SK-N-SH (cell line): ENCODE measurements at regions of chr2 and their contacts with region 1.

Region 1: GRCh38 chr2:216666461-216667233 is 28.7 kb downstream of the IGFBP5 start:
- DNase-seq: peak; percentile 79
- H3K4me3 ChIP-seq: no peak overlapping the region; a peak in 1 of 4 replicates
- H3K27ac ChIP-seq: no peak overlapping the region; a peak in 1 of 4 replicates
- H3K4me1 ChIP-seq: peaks cover 14 to 23% of the 10 kb centered on the region in 2 experiments; a peak in 3 of 4 replicates
- H3K27me3 ChIP-seq: no peaks in the 10 kb centered on the region
- CTCF ChIP-seq: peak; percentile 98
- EP300 ChIP-seq: no peak
- RAD21 ChIP-seq: peak; percentile 100

Region 2: GRCh38 chr2:216519154-216519762 is 147.4 kb before region 1 on chr2:
- CTCF ChIA-PET with region 1: interaction called, 614 read pairs
- POLR2A ChIA-PET with region 1: interaction called, 17 read pairs
- DNase-seq: peak; percentile 64
- H3K4me3 ChIP-seq: no peak overlapping the region; a peak in 1 of 4 replicates
- H3K27ac ChIP-seq: no peak overlapping the region
- H3K4me1 ChIP-seq: peaks cover 0 to 5% of the 10 kb centered on the region in 2 experiments; a peak in 2 of 4 replicates
- H3K27me3 ChIP-seq: no peaks in the 10 kb centered on the region
- CTCF ChIP-seq: peak; percentile 85
- EP300 ChIP-seq: no peak
- RAD21 ChIP-seq: peak; percentile 91

Region 3: GRCh38 chr2:216590780-216591179 is 75.9 kb before region 1 on chr2:
- CTCF ChIA-PET with region 1: interaction called, 11 read pairs
- POLR2A ChIA-PET with region 1: no interaction called
- DNase-seq: peak; percentile 30
- H3K4me3 ChIP-seq: no peak overlapping the region
- H3K27ac ChIP-seq: no peak overlapping the region
- H3K4me1 ChIP-seq: peaks cover 14 to 21% of the 10 kb centered on the region in 2 experiments
- H3K27me3 ChIP-seq: no peaks in the 10 kb centered on the region
- CTCF ChIP-seq: no peak
- EP300 ChIP-seq: no peak
- RAD21 ChIP-seq: 0 out of 2 replicates have a peak, but pooled peaks have one; percentile 7

Region 4: DNA sequence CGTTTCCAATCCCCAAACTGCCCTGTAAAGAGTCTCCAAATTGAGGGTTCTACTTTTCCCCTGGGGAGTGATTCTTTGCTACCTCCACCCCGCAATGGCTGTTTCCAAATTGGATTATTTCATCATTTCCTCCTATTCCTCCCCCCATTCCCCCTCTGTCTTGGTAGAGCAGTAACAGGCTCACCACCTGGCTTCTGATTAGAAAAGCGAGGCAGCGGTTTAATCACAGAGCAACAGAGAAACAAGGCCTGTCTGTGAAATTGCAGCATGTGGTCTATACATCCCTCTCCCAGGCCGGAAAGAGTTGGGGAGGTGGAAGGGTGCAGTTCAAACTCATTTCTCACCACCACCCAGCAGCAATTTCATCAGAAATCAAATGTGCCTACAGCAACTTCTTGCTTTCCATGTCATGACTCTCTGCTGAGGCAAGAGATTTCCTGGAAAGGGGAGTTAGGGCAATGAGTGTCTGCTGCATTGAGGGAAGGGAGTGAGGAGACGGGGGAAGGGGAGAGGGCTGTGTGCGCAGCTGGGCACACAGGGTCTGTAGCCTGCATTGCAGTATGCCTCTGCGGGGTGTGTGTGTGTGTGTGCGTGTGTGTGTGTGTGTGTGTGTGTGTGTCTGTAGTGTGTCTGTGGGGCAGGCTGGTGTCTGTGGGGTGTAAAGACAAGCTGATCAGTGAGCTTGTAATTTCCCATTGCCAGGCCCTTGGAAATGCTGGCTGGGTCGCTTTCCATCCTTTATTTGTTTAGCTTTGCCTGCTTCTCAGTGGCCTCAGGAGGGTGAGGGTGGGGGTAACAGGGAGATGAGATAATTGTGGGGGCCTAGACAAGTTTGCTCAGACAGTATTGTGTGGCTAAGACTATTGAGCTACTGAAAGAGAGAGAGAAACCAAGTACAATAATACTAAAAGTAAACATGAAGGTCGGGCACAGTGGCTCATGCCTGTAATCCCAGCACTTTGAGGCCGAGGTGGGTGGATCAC is 46.9 kb before region 1 on chr2:
- CTCF ChIA-PET with region 1: interaction called, 41 read pairs
- POLR2A ChIA-PET with region 1: no interaction called
- DNase-seq: peak; percentile 74
- H3K4me3 ChIP-seq: no peak overlapping the region
- H3K27ac ChIP-seq: peak overlapping the region in 1 of 2 experiments; percentile 90; a peak in 2 of 4 replicates
- H3K4me1 ChIP-seq: peaks cover 19 to 38% of the 10 kb centered on the region in 2 experiments; a peak in 3 of 4 replicates
- H3K27me3 ChIP-seq: no peaks in the 10 kb centered on the region
- CTCF ChIP-seq: no peak
- EP300 ChIP-seq: peak in 1 of 2 experiments; percentile 76; a peak in 2 of 4 replicates
- RAD21 ChIP-seq: peak; percentile 22; the same call in 1 of the 2 replicates

Region 5: GRCh38 chr2:216651351-216651881 is 15.2 kb before region 1 on chr2:
- CTCF ChIA-PET with region 1: interaction called, 76 read pairs
- POLR2A ChIA-PET with region 1: no interaction called
- DNase-seq: no peak
- H3K4me3 ChIP-seq: no peak overlapping the region
- H3K27ac ChIP-seq: peak overlapping the region; percentile 31 to 58; a peak in 3 of 4 replicates
- H3K4me1 ChIP-seq: peaks cover 9 to 44% of the 10 kb centered on the region in 2 experiments
- H3K27me3 ChIP-seq: no peaks in the 10 kb centered on the region
- CTCF ChIP-seq: no peak
- EP300 ChIP-seq: no peak
- RAD21 ChIP-seq: no peak

Region 6: GRCh38 chr2:216687646-216688045 is 21.0 kb after region 1 on chr2:
- CTCF ChIA-PET with region 1: interaction called, 12 read pairs
- POLR2A ChIA-PET with region 1: no interaction called
- DNase-seq: no peak
- H3K4me3 ChIP-seq: no peak overlapping the region; a peak in 1 of 4 replicates
- H3K27ac ChIP-seq: no peak overlapping the region
- H3K4me1 ChIP-seq: peaks cover 12 to 29% of the 10 kb centered on the region in 2 experiments; a peak in 3 of 4 replicates
- H3K27me3 ChIP-seq: no peaks in the 10 kb centered on the region
- CTCF ChIP-seq: peak; percentile 53
- EP300 ChIP-seq: no peak
- RAD21 ChIP-seq: no peak

Region 7: GRCh38 chr2:216717491-216717901 is 50.8 kb after region 1 on chr2:
- CTCF ChIA-PET with region 1: no interaction called
- POLR2A ChIA-PET with region 1: no interaction called
- DNase-seq: no peak
- H3K4me3 ChIP-seq: no peak overlapping the region
- H3K27ac ChIP-seq: no peak overlapping the region
- H3K4me1 ChIP-seq: peaks cover 7 to 14% of the 10 kb centered on the region in 2 experiments; a peak in 3 of 4 replicates
- H3K27me3 ChIP-seq: no peaks in the 10 kb centered on the region
- CTCF ChIP-seq: no peak
- EP300 ChIP-seq: no peak
- RAD21 ChIP-seq: no peak

Region 8: DNA sequence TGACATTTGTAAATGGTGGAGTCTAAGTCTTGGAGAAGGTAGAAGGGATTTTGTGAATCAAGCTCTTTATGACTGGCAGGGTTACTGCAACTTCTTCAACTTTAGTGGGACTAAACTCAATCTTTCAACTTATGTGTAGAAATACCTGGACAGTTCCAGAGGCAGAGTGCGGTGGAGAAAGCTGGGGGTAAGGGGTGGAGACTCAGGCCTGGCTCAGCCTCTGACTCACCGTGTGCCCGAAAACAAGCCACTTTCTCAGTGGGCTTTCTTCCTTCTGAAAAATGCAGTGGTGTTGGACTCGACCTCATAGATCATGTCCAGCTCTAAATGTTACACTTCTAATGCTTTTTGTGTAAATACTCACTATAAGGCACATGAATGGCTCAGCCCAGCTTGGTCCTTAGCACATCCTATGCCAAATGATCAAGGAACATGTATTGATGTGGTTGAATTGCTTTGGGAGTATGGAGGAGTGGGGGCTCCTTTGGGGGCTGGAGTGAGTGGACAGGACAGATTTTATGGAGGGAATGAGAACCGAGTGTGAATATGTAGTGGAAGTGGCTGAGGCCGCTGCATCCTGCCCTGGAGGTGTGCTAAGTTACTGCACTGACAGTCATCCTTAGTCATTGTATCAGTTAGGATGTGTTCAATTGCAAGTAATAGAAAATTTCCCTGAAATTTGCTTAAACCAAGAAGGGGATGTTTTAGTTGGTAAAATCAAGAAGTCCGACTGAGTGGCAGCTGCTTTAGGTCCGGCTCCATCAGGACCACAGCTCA is 60.9 kb after region 1 on chr2:
- CTCF ChIA-PET with region 1: no interaction called
- POLR2A ChIA-PET with region 1: no interaction called
- DNase-seq: no peak
- H3K4me3 ChIP-seq: no peak overlapping the region
- H3K27ac ChIP-seq: no peak overlapping the region
- H3K4me1 ChIP-seq: peaks cover 0 to 10% of the 10 kb centered on the region in 2 experiments; a peak in 1 of 4 replicates
- H3K27me3 ChIP-seq: no peaks in the 10 kb centered on the region
- CTCF ChIP-seq: no peak
- EP300 ChIP-seq: no peak
- RAD21 ChIP-seq: no peak

Region 9: DNA sequence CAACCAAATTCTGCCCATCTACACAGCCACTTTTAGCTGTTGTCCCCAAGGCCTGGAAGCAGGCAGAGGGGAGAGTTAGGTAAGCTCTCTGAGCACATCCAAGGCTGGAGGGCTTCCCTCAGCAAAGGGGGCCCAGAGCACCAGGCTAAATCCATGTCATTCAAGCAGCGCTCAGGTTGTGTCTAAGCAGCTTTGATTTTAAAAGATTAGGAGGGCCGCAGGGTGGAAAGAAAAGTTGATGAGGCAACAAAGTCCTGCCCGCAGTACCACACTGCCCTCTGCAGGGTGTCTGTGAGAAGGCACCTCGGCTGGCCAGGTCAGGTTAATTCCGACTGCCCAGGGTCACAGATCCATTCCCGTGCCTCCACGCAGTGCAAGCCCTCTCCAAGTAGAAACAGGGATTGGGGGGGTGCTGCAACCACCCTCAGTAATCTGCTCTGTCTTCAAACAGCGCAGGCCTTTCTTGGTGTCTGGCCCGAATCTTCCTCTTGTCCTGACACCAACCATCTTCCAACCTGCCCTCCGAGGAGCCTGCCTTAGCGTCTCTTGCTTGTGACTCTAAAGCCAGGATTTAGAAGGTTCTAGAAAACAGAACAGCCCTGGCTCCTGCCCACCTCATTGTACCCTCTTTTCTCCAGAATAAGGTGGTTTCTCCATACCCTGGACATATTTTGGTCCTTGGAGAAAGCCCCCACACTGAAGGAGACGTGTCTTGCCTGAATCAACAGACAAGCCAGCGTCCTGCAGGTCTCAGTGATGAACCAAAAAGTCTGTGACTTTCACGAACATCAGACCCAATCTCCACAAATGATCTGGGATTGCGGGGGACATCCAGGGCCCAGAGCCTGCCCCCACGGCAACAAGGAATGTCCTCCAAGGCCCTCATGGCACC is 1047.0 kb after region 1 on chr2:
- CTCF ChIA-PET with region 1: interaction called, 27 read pairs
- POLR2A ChIA-PET with region 1: no interaction called
- DNase-seq: peak; percentile 79
- H3K4me3 ChIP-seq: peak overlapping the region in 1 of 2 experiments; percentile 14; a peak in 1 of 4 replicates
- H3K27ac ChIP-seq: peak overlapping the region; percentile 22 to 46; a peak in 2 of 4 replicates
- H3K4me1 ChIP-seq: peaks cover 26 to 28% of the 10 kb centered on the region in 2 experiments; a peak in 3 of 4 replicates
- H3K27me3 ChIP-seq: no peaks in the 10 kb centered on the region
- CTCF ChIP-seq: peak; percentile 96
- EP300 ChIP-seq: peak in 1 of 2 experiments; percentile 32; a peak in 1 of 4 replicates
- RAD21 ChIP-seq: peak; percentile 98